Right ventricle myocardium inferior (tissue), 1 donor: ENCODE measurements at regions of chr7 and their contacts with region 1.

Region 1: GRCh38 chr7:137992550-137993394 is 9.1 kb downstream of the CREB3L2 start:
- DNase-seq: peak; percentile 71
- ATAC-seq: peak; percentile 87

Region 2: GRCh38 chr7:136868496-136869000 is 1124.2 kb before region 1 on chr7 and contains the start of gene CHRM2:
- intact Hi-C with region 1: no loop called
- DNase-seq: no peak
- ATAC-seq: peak; percentile 47
- total RNA-seq, gene CHRM2: 70.4 TPM

Region 3: GRCh38 chr7:137934941-137935883 is 57.6 kb before region 1 on chr7:
- intact Hi-C with region 1: loop called (anchors 5 kb)
- DNase-seq: no peak
- ATAC-seq: no peak

Region 4: DNA sequence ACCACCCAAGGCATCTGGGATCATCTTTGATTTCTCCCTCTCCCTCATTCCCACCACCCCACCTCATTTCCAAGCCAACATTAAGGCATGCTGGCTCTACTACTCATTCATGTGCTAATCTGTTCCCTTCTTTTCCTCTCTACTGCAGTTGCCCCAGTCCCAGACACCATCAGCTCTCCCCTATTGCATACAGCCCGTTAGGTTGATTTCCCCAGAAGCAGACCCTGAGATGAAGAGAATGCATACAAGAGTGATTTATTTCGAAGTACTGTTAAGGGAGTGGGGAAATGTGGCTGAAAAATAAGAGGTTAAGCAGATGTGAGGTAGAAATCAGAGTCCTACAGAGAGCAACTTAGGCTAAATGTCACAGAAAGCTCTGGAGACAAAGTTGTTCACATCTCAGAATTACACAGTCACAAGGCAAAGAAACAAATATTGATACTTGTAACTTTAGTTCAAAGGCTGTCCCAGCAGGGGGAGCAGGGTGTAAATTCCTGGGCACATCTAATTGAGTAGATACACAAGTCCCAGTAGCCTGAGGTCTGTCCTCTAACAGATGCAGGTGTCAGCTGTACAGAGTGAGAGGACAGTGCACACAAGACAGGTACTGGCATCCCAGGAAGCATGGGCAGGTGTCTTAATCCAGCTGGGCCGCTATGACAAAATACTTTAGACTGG is 104.4 kb after region 1 on chr7:
- intact Hi-C with region 1: no loop called
- DNase-seq: no peak
- ATAC-seq: no peak